Activated CD4-positive, alpha-beta memory T cell treated with anti-CD3 and anti-CD28 coated beads, Interleukin-2, amount 10 ng/mL, durations not matched to agents 7 days and 5 days (primary cell): ENCODE measurements at regions of chr7 and their contacts with region 1.

Region 1: DNA sequence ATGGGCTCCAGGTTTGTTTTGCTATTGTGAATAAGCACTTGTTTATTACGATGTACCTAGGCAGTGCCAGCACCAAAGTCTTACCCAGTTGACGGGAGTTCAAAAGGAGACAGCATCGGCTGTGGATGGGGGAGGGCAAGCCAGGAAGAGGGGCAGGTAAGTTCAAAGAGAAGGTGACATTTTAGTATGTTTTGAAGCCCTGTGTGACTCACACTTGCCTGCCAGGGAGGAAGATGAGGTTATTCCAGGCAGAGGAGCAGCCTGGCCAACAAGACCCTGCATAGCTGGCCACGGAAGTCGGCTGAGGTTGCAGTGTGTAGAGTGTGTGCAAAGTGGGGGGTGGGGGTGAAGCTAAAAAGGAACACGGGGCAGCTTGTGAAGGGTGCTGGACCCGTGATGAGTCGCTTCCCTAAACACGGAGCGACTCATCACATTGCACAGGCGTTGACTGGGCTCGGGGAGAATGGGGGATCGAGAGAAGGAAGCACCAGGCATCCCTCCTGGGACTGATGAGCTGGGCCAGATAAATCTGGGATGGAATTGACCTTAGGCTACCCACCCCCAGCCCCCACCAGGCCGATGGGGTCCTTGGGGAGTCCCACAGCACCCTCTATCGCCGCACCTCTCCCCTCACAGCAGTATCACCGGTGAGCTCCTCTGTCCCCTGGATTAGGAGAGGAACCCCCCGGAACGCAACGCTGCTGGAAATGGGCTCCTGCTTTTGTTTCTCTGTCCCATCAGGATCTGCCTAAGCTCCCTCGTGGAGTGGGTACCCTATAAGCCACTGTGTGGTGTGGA is 97.9 kb upstream of the IKZF1 start:
- DNase-seq: peak; percentile 77
- H3K4me3 Mint-ChIP-seq: peak overlapping the region; percentile 48
- H3K27ac Mint-ChIP-seq: peak overlapping the region; percentile 93
- H3K4me1 Mint-ChIP-seq: peaks cover 86% of the 10 kb centered on the region
- H3K27me3 Mint-ChIP-seq: no peaks in the 10 kb centered on the region

Region 2: DNA sequence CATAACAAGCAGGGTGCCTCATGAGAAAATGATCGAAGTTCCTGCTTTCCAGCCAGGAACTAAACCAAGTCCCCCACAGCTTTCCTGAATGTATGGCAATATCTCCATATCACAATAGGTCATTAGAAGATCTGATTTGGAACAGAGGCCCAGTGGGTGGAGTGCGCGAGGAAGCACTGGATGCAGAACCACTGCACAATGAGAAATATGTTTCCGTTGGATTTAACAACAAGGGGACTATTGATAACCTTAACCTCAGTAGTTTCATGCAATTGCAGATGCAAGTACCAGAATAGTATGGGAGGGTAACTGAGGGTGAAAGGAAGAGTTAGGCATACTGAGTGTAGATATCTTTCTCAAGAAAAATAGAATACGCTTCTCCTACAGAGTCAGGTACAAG is 158.9 kb before region 1 on chr7:
- CTCF ChIA-PET with region 1: no interaction called
- POLR2A ChIA-PET with region 1: no interaction called
- DNase-seq: no peak
- H3K4me3 Mint-ChIP-seq: no peak overlapping the region
- H3K27ac Mint-ChIP-seq: no peak overlapping the region
- H3K4me1 Mint-ChIP-seq: no peaks in the 10 kb centered on the region
- H3K27me3 Mint-ChIP-seq: peaks cover 15% of the 10 kb centered on the region

Region 3: DNA sequence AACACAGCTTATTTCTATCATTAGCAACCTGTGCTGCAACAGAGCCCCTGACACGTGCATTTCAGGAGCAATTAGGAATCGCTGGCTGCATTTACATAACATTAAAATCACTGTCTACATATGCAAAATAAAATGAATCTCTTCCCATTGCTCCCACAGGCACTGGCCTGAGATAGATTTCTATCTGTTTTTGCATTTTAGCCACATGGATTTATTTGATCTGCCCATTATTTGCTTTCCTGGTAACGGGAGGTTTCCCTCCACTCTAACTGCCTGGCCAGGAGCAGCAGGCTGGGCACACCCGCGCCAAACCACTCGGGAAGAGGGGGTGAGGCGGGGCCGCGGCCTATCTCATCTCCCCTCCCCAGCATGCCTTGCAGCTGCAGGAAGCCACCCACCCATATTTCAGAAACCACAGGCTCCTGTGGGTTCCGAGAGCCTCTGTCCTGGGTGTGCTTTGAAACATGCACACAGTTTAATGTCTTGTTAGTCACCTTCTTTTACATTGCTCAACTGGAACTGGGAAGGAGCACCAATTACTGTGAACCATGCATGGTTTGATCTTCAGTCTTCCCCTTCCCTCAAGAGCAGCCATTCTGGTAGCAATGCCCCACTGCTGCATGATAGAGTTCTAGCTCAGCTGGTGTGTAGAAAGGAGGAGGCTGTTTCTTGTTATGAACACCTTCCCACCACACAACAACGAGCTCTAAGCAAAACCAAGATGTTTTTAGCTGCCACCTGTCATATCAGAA is 60.2 kb after region 1 on chr7:
- CTCF ChIA-PET with region 1: interaction called, 40 read pairs
- POLR2A ChIA-PET with region 1: interaction called, 90 read pairs
- DNase-seq: peak; percentile 88
- H3K4me3 Mint-ChIP-seq: peak overlapping the region; percentile 62
- H3K27ac Mint-ChIP-seq: peak overlapping the region; percentile 98
- H3K4me1 Mint-ChIP-seq: peaks cover 92% of the 10 kb centered on the region
- H3K27me3 Mint-ChIP-seq: no peaks in the 10 kb centered on the region

Region 4: DNA sequence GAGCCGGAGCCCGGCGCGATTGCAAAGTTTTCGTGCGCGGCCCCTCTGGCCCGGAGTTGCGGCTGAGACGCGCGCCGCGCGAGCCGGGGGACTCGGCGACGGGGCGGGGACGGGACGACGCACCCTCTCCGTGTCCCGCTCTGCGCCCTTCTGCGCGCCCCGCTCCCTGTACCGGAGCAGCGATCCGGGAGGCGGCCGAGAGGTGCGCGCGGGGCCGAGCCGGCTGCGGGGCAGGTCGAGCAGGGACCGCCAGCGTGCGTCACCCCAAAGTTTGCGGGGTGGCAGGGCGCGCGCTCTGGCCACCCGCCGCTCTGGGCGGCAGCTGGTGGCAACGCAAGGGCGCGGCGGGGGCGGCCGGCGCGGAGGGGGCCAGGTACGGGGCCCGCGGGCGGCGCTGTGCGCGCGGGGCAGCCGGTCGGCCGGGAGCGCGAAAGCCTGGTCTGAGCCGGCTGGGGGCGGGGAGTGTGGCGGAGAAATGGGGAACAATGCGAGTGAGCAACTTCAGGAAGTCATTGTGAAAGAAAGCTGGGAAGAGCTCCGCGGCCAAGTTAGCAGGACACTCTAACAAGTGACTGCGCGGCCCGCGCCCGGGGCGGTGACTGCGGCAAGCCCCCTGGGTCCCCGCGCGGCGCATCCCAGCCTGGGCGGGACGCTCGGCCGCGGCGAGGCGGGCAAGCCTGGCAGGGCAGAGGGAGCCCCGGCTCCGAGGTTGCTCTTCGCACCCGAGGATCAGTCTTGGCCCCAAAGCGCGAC is 97.7 kb after region 1 on chr7 and contains the start of gene IKZF1:
- CTCF ChIA-PET with region 1: interaction called, 108 read pairs
- POLR2A ChIA-PET with region 1: interaction called, 367 read pairs
- DNase-seq: peak; percentile 58
- H3K4me3 Mint-ChIP-seq: peak within 1 kb of the TSS; percentile 88
- H3K27ac Mint-ChIP-seq: peak within 1 kb of the TSS; percentile 99
- H3K4me1 Mint-ChIP-seq: peaks cover 29% of the 10 kb centered on the region
- H3K27me3 Mint-ChIP-seq: peaks cover 8% of the 10 kb centered on the region
- total RNA-seq, gene IKZF1: 383 to 404 TPM

Region 5: DNA sequence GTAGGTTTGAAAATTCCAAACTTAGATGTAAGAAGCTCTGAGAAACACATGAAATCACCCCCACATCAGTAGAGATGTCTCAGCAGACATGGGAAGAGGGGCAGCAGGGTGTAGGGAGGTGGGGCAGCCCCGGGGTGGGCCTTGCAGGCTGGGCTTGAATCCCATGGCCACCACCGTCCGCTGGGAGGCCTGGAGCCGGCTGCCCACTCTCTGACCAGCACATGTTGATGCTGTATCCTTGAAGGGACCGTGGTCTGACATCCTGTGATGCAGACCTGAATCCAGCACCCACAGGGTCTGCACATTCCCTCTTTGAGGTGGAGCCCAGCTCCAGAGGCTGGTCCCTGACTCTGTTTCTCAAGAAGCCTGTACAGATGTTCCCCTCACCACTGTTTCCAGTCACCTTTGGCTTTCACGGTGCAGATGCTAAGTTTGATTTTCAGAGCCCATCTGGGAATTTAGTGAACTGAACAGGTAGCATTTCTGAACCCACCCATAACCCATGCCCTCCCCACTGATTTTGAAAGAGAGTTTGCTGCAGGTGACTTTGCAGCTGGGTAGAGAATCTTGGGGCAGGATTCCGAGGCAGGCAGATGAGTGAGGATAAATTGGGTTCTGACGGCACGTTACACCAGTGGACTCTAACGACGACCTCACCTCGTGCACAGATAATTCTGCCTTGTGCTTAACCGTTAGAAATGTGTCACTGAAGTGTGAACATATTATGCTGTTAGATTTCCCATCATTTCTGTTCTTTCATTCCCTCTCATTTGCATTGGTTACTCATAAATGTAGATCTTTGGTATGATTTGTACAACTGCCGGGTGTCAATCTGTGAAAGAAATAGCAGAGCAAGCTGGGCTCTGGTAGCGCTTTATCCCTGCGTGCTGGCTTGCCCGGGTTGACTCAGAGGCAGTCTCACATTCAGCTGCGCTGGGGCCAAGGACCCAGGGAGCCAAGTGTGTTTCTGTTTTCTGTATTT is 143.6 kb after region 1 on chr7:
- CTCF ChIA-PET with region 1: interaction called, 17 read pairs
- POLR2A ChIA-PET with region 1: interaction called, 61 read pairs
- DNase-seq: peak; percentile 87
- H3K4me3 Mint-ChIP-seq: peak overlapping the region; percentile 62
- H3K27ac Mint-ChIP-seq: peak overlapping the region; percentile 92
- H3K4me1 Mint-ChIP-seq: peaks cover 97% of the 10 kb centered on the region
- H3K27me3 Mint-ChIP-seq: no peaks in the 10 kb centered on the region

Region 6: DNA sequence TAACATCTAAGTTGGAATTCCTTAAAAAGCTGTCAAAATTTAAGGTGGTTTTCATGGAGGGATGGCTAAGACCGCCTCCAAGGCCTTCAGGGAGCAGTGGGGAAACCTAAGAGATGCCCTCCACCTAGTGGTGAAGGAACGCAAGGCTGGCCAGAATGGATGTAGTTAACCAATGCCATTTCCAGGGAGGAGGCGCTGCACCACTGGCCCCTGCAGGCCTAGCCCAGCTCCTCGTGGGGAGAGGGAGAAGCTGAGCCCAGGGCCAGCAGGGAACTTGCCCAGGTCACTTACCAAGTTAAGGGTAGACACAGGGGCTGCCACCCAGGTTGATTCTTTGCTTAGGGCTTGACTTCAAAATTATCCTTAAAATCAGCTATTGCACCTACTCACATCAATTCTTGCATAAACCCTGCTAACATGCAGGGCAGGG is 211.4 kb after region 1 on chr7:
- CTCF ChIA-PET with region 1: interaction called, 92 read pairs
- POLR2A ChIA-PET with region 1: interaction called, 6 read pairs
- DNase-seq: peak; percentile 81
- H3K4me3 Mint-ChIP-seq: no peak overlapping the region
- H3K27ac Mint-ChIP-seq: no peak overlapping the region
- H3K4me1 Mint-ChIP-seq: peaks cover 23% of the 10 kb centered on the region
- H3K27me3 Mint-ChIP-seq: no peaks in the 10 kb centered on the region